Left ventricle myocardium inferior (tissue), 1 donor: ENCODE measurements at regions of chr6 and their contacts with region 1.

Region 1: GRCh38 chr6:157184202-157185020 is 138.9 kb downstream of the TMEM242 start:
- DNase-seq: peak; percentile 64
- H3K4me3 ChIP-seq: peak overlapping the region; percentile 26
- H3K27ac ChIP-seq: peak overlapping the region; percentile 14
- H3K4me1 ChIP-seq: peaks cover 39% of the 10 kb centered on the region
- H3K27me3 ChIP-seq: no peaks in the 10 kb centered on the region
- CTCF ChIP-seq: peak; percentile 97

Region 2: GRCh38 chr6:156564127-156564806 is 620.1 kb before region 1 on chr6:
- intact Hi-C with region 1: loop called (anchors 10 kb)
- DNase-seq: peak; percentile 78
- H3K4me3 ChIP-seq: peak overlapping the region; percentile 11
- H3K27ac ChIP-seq: peak overlapping the region; percentile 42
- H3K4me1 ChIP-seq: peaks cover 13% of the 10 kb centered on the region
- H3K27me3 ChIP-seq: no peaks in the 10 kb centered on the region
- CTCF ChIP-seq: peak; percentile 97

Region 3: GRCh38 chr6:157034436-157035230 is 149.8 kb before region 1 on chr6:
- intact Hi-C with region 1: loop called (anchors 10 kb)
- DNase-seq: no peak
- H3K4me3 ChIP-seq: no peak overlapping the region
- H3K27ac ChIP-seq: peak overlapping the region; percentile 69
- H3K4me1 ChIP-seq: peaks cover 54% of the 10 kb centered on the region
- H3K27me3 ChIP-seq: no peaks in the 10 kb centered on the region
- CTCF ChIP-seq: peak; percentile 70

Region 4: DNA sequence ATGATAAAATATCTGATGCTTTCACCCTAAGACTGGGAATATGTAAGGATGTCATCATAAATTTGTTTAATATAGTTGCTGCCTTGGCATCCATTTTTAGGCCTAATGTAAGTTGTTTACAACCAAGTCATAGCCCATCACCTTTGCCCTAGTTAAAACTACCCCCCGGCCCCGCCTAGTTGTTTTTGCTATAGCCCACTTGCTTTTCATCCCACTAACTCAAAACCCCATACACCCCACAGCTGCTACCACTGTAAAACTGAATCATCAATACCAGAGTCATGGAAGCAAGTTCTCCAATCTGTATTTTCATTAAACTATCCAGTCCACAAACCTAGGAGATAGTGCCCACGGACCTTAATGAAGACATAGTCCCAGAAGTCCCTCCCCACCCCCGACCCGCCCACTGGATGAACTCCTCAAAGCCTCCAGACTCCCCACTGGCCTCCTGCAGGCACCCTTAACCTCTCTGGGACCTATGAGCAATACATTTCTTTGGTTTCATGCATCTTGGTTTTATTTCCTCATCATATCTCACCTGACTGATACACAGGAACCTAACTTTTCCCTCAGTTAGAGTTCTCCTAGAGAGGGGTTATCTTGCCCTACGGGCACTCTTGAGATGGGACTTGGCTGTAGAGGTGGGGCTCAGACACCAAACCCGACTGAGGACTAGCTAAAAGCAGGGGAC is 184.1 kb after region 1 on chr6:
- intact Hi-C with region 1: no loop called
- DNase-seq: no peak
- H3K4me3 ChIP-seq: no peak overlapping the region
- H3K27ac ChIP-seq: no peak overlapping the region
- H3K4me1 ChIP-seq: no peaks in the 10 kb centered on the region
- H3K27me3 ChIP-seq: no peaks in the 10 kb centered on the region
- CTCF ChIP-seq: no peak